ENCODE measurements at regions of chr6 and their contacts with region 1.

Region 1: DNA sequence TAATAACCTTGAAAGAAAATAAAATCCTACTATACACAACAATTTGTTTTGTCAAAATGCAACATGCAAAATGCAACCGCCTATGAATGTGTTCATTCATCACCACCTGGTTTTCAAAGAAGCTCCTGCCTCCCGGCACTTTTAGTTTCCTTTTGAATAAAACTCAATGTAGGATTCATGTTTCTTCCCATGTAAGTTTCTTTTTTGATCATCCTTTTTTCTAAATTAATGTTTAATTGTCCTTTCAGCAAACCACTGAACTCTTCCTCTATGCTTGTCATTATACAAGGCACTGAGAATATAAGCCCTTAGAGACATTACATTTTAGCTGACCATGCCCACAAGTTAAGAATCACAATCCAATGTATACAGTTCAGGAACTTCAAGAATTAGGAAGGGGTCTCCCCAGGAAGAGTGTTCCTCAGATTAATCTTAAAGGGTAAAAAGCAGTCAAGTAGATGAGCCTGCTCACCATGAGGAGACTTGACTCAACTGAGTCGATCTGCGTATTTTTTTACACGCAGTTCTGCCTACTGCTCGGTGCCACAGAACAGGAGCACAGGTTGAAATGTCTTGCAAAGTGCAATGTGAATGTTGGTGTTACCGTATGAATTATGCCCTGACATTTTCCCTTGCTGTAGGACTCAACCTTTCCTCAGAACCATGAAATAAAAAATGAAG is 7.2 kb upstream of the THEMIS start:
- DNase-seq: no peak
- H3K4me3 Mint-ChIP-seq: peak overlapping the region; percentile 62
- H3K27ac Mint-ChIP-seq: peak overlapping the region; percentile 80
- H3K4me1 Mint-ChIP-seq: peaks cover 32% of the 10 kb centered on the region
- H3K27me3 Mint-ChIP-seq: no peaks in the 10 kb centered on the region

Region 2: DNA sequence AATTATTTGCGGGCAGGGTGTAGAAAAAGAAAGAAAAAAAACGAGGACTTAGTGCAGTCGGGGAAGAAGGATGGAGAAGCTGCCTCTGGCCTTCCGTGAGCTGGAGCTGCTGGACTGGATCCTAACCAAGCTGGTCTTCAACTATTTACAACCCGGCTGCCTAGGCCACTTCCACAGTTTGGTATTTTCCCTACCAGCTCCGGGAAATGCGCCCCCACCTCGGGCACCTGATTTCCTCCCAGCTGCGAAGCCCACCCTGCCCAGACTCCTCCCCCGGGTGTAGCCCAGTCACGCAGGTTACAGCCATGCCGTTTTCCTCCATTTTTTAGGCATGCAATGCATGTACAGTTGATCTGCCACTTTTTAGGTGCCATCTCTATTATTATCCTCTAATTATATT is 28.4 kb before region 1 on chr6:
- intact Hi-C with region 1: loop called (anchors 1 kb)
- DNase-seq: no peak
- H3K4me3 Mint-ChIP-seq: peak overlapping the region; percentile 58
- H3K27ac Mint-ChIP-seq: peak overlapping the region; percentile 72
- H3K4me1 Mint-ChIP-seq: peaks cover 52% of the 10 kb centered on the region
- H3K27me3 Mint-ChIP-seq: no peaks in the 10 kb centered on the region

Region 3: DNA sequence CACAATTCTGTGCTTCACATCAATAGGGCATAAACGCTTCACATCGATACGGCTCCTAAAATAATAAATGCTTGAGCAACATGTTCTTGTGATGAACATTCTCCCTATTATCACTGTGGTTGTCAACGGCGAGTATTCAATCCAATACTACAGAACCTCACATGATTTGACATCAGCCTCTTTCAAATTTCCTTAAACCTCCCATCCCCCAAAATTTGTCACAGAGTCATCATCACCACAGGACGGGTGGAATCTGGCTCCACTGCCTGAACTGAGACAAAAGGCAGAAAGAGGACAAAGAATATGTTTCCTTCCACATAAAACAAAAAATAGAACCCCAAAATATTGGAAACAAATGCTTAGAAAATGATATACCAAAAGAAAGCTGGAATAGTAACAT is 14.6 kb before region 1 on chr6:
- intact Hi-C with region 1: loop called (anchors 1 kb)
- DNase-seq: no peak
- H3K4me3 Mint-ChIP-seq: peak overlapping the region; percentile 60
- H3K27ac Mint-ChIP-seq: peak overlapping the region; percentile 69
- H3K4me1 Mint-ChIP-seq: peaks cover 45% of the 10 kb centered on the region
- H3K27me3 Mint-ChIP-seq: no peaks in the 10 kb centered on the region

Region 4: DNA sequence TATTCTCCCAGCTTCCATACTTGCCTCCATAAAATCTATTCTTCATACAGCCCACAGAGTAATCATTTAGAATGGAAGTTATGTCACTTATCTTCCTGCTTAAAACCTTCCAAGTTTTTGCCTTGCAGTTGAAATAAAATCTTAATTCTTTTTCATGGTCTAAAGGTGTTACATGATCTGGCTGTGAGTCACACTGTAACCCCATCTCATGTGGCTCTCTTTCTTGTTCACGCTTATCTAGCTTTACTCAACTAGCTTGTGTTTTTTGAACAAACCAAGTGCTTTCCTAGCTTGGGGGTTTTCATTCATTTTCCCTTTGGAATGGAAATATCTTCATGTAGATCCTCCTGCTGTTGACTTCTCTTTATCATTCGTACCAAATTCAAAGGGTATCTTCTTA is 16.3 kb after region 1 on chr6:
- intact Hi-C with region 1: loop called (anchors 1 kb)
- DNase-seq: no peak
- H3K4me3 Mint-ChIP-seq: no peak overlapping the region
- H3K27ac Mint-ChIP-seq: no peak overlapping the region
- H3K4me1 Mint-ChIP-seq: peaks cover 44% of the 10 kb centered on the region
- H3K27me3 Mint-ChIP-seq: no peaks in the 10 kb centered on the region

Region 5: GRCh38 chr6:127938701-127939100 is 30.6 kb after region 1 on chr6:
- intact Hi-C with region 1: loop called (anchors 1 kb)
- DNase-seq: no peak
- H3K4me3 Mint-ChIP-seq: no peak overlapping the region
- H3K27ac Mint-ChIP-seq: peak overlapping the region; percentile 31
- H3K4me1 Mint-ChIP-seq: peaks cover 38% of the 10 kb centered on the region
- H3K27me3 Mint-ChIP-seq: no peaks in the 10 kb centered on the region